Right ventricle myocardium inferior (tissue), 1 donor: ENCODE measurements at regions of chr1 and their contacts with region 1.

Region 1: GRCh38 chr1:172826096-172826743 is 167.3 kb downstream of the FASLG start:
- DNase-seq: no peak
- ATAC-seq: peak; percentile 92

Region 2: DNA sequence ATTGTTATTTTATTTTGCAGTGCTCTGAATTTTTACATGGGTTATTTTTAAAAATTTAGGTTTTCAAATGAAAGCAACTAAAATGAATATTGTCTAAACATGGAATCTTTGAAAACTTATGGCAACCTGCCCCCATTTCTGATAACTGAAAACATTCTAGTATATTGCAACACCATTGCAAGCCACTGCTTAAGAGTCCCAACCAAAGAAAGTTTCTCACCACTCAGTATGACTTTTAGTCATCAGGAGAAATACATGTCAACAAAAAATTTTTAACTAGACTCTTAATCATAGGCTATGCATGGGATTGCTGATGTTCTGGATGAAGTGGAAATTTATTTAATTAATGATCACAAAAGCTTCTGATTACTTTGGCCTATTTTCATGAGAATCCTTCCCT is 112.5 kb after region 1 on chr1:
- intact Hi-C with region 1: loop called (anchors 10 kb)
- DNase-seq: no peak
- ATAC-seq: no peak

Region 3: GRCh38 chr1:173122958-173123852 is 297.0 kb after region 1 on chr1:
- intact Hi-C with region 1: loop called (anchors 10 kb)
- DNase-seq: peak; percentile 74
- ATAC-seq: peak; percentile 93

Region 4: GRCh38 chr1:173202430-173203145 is 376.4 kb after region 1 on chr1:
- intact Hi-C with region 1: loop called (anchors 2 kb)
- DNase-seq: no peak
- ATAC-seq: peak; percentile 76